ENCODE measurements at regions of chr16 and their contacts with region 1.

Region 1: GRCh38 chr16:66516808-66517585 is 32.9 kb downstream of the TK2 start:
- DNase-seq: peak; percentile 98
- ATAC-seq: peak; percentile 93
- H3K4me3 ChIP-seq: no peak overlapping the region
- H3K27ac ChIP-seq: peak overlapping the region; percentile 92 to 99
- H3K4me1 ChIP-seq: peaks cover 0 to 5% of the 10 kb centered on the region in 2 donors
- H3K27me3 ChIP-seq: no peaks in the 10 kb centered on the region

Region 2: GRCh38 chr16:66427036-66427860 is 89.7 kb before region 1 on chr16 and contains the start of gene BEAN1:
- intact Hi-C with region 1: no loop called
- DNase-seq: no peak
- ATAC-seq: peak; percentile 13
- H3K4me3 ChIP-seq: peak within 1 kb of the TSS; percentile 55 to 65
- H3K27ac ChIP-seq: no peak within 1 kb of the TSS
- H3K4me1 ChIP-seq: no peaks in the 10 kb centered on the region
- H3K27me3 ChIP-seq: no peaks in the 10 kb centered on the region
- total RNA-seq, gene BEAN1: 0.16 to 1.8 TPM

Region 3: GRCh38 chr16:66552286-66553177 is 35.5 kb after region 1 on chr16 and contains the start of gene CKLF:
- intact Hi-C with region 1: loop called in 1 of 2 experiments (anchors 5 kb)
- DNase-seq: peak; percentile 93 to 97
- ATAC-seq: peak; percentile 93
- H3K4me3 ChIP-seq: peak within 1 kb of the TSS; percentile 62 to 64
- H3K27ac ChIP-seq: peak within 1 kb of the TSS in 1 of 2 donors; percentile 92
- H3K4me1 ChIP-seq: peaks cover 3 to 5% of the 10 kb centered on the region in 2 donors
- H3K27me3 ChIP-seq: no peaks in the 10 kb centered on the region
- total RNA-seq, gene CKLF: 23.4 to 44.4 TPM

Region 4: DNA sequence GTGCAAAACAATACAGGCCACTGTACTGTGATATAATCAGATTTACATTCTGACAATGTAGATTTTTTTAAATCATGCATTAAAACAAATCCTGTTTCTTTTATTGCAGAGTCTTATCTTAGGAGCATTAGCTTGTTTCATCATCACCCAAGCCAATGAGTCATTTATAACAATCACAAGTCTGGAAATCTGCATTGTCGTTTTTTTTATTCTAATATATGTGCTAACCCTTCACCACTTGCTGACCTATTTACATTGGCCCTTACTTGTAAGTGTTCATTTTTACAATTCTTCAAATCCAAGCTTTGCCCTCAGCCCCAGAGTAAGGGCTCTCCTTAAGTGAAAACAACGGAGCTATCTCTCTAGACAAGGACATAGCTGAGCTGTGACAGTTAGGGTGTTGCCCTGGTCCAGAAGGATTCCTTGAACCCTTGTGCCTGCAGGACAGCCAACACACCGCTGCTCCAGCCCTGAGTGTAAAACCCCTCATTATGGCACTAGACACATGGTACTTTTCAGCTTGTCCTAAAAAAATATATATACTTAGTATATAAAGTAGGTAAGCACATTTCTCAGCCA is 52.9 kb after region 1 on chr16:
- intact Hi-C with region 1: no loop called
- DNase-seq: no peak
- ATAC-seq: no peak
- H3K4me3 ChIP-seq: no peak overlapping the region
- H3K27ac ChIP-seq: no peak overlapping the region
- H3K4me1 ChIP-seq: no peaks in the 10 kb centered on the region
- H3K27me3 ChIP-seq: no peaks in the 10 kb centered on the region

Region 5: GRCh38 chr16:67244387-67245185 is 727.6 kb after region 1 on chr16:
- intact Hi-C with region 1: no loop called
- DNase-seq: peak; percentile 87 to 90
- ATAC-seq: peak; percentile 13
- H3K4me3 ChIP-seq: no peak overlapping the region
- H3K27ac ChIP-seq: peak overlapping the region in 1 of 2 donors; percentile 23
- H3K4me1 ChIP-seq: no peaks in the 10 kb centered on the region
- H3K27me3 ChIP-seq: no peaks in the 10 kb centered on the region

Measured in aorta (tissue), 5 donors.